ENCODE measurements at regions of chr1 and their contacts with region 1.

Region 1: DNA sequence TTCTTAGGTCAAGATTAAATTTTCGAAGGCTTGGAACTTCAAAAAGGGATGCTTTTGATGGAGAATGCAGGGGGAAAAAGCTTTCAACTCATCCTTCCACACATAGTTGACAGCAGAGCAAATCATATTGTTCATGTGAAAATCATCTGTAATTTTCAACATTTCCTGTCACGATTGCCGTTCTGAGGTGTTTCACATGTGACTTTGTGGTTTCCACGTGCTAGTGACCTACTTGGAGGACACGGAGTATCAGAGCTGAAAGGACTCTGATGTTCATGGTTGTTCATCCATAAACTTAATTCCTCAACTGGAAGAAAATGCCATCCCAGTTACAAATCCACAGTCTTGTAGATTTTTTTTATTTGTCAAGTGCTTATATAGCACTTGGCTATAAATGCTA is 79.1 kb downstream of the ZP4 start:
- DNase-seq: no peak
- H3K4me3 Mint-ChIP-seq: no peak overlapping the region
- H3K27ac Mint-ChIP-seq: no peak overlapping the region
- H3K4me1 Mint-ChIP-seq: no peaks in the 10 kb centered on the region
- H3K27me3 Mint-ChIP-seq: peaks cover 3% of the 10 kb centered on the region

Region 2: DNA sequence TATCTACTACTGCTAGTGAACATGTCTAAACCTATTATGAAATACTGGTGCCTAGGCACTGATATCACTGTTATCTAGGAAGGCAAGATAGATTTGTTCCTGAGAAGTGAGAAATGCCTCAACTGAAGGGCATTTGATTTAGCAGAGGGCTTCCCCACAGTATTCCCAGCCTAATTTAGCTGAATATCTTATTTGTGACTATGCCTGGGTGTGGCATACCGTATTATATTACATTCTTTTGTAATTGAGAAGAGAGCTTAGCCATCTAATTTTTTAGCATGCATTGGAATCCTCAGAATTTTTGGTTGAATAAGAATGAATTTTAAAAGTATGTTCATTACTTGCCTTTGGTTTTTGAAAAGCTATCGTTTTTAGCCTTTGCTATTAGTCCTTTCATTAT is 20.0 kb before region 1 on chr1:
- CTCF ChIA-PET with region 1: interaction called, 10 read pairs
- POLR2A ChIA-PET with region 1: no interaction called
- intact Hi-C with region 1: no loop called
- DNase-seq: no peak
- H3K4me3 Mint-ChIP-seq: no peak overlapping the region
- H3K27ac Mint-ChIP-seq: no peak overlapping the region
- H3K4me1 Mint-ChIP-seq: no peaks in the 10 kb centered on the region
- H3K27me3 Mint-ChIP-seq: no peaks in the 10 kb centered on the region

Measured in activated CD4-positive, alpha-beta memory T cell treated with anti-CD3 and anti-CD28 coated beads for 36 hours (primary cell).